AG04449 (cell line): ENCODE measurements at regions of chr12 and their contacts with region 1.

Region 1: DNA sequence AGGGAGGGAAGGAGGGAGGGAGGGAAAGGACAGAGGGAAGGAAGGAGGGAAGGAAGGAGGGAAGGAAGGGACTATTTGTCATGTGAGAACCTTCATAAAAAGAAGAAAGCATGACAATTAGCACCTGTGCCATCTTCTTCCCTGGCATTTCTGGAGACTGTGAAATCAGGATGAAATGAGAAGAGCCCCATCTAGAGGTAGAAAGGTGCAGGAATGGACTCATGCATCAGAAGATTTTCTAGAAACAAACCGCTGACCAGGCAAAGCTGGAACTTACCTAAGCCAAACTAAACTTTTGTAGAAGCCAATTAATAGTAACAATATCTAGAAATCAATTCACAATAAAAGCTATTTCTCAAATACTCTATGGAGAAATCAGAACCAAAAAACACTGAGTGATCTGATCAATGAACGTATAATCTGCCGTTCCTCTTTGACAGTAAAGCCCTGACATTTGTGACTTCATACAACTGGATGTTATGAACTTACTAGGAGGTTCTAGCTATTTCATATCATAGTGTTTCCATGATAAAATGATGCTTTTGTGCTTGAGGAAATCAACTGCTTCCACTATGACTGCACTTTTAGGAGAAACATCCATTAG is 24.4 kb upstream of the CRACR2A start:
- DNase-seq: no peak
- H3K4me3 ChIP-seq: no peak overlapping the region
- CTCF ChIP-seq: peak; percentile 60

Region 2: GRCh38 chr12:3313675-3314663 is 463.3 kb before region 1 on chr12:
- CTCF ChIA-PET with region 1: interaction called, 16 read pairs
- POLR2A ChIA-PET with region 1: no interaction called
- DNase-seq: no peak
- H3K4me3 ChIP-seq: no peak overlapping the region
- CTCF ChIP-seq: peak; percentile 47

Region 3: GRCh38 chr12:3680896-3681594 is 96.3 kb before region 1 on chr12:
- CTCF ChIA-PET with region 1: no interaction called
- POLR2A ChIA-PET with region 1: no interaction called
- DNase-seq: no peak
- H3K4me3 ChIP-seq: no peak overlapping the region
- CTCF ChIP-seq: no peak